Posterior cingulate gyrus (tissue), 11 donors: ENCODE measurements at regions of chr17 and their contacts with region 1.

Region 1: GRCh38 chr17:50697663-50698274 is 9.9 kb downstream of the ANKRD40 start:
- DNase-seq: no peak

Region 2: GRCh38 chr17:50626037-50626574 is 71.7 kb before region 1 on chr17:
- intact Hi-C with region 1: loop called (anchors 5 kb)
- DNase-seq: peak in 7 of 10 donors; percentile 50 to 94 (median 56)

Region 3: GRCh38 chr17:50638851-50639767 is 58.7 kb before region 1 on chr17:
- intact Hi-C with region 1: no loop called
- DNase-seq: peak in 8 of 10 donors; percentile 44 to 93 (median 53)